GM12878 (cell line): ENCODE measurements at regions of chr1 and their contacts with region 1.

Region 1: DNA sequence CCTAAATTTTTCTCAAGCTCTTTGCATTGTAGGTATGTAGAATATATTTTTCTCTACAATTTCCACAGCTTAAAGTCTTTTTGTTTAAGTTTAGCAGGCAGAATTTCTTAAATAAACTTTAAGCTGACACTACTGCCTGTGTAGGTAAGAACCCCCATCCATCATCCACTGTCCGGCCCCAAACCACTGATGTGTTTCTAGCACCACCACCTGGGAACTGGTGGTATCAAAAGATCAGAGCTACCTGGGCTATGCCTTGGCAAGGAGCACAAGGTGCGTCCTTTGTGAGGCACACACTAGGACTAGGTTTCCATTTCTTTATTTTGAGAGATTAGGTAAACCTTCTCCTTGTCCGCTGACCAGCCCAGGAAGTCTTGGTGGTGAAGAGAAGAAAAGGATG is 10.5 kb upstream of the LELP1 start:
- DNase-seq: no peak
- ATAC-seq: peak; percentile 77
- H3K4me3 ChIP-seq: no peak overlapping the region
- H3K27ac ChIP-seq: no peak overlapping the region
- H3K4me1 ChIP-seq: no peaks in the 10 kb centered on the region
- H3K27me3 ChIP-seq: no peaks in the 10 kb centered on the region; a peak in 1 of 4 replicates
- CTCF ChIP-seq: peak; percentile 44 to 57 (median 46); a peak in 5 of 6 replicates
- EP300 ChIP-seq: no peak
- POLR2A ChIP-seq: no peak
- RAD21 ChIP-seq: peak; percentile 83

Region 2: DNA sequence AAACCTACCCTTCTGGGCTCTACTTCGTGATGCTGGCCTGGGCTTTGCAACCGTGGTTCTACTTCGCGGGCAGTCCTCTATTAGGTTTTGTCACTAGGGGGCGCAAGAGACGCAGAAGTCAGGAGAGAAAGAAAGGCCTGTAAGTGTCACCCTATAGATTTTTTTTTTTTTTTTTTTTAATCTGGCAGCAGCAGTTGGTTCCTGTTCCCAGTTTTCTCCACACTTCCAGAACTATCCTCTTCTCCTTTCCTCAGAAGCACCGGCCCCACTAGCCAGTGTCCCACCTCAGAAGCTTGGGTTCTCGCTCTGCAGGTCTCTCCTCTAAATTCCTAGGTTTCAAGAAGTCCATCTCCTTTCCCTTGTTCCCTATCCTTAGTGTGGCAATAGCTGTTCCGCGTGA is 538.6 kb before region 1 on chr1:
- CTCF ChIA-PET with region 1: interaction called, 20 read pairs
- POLR2A ChIA-PET with region 1: no interaction called
- RAD21 ChIA-PET with region 1: interaction called, 9 read pairs
- SMC1A ChIA-PET with region 1: interaction called, 6 read pairs
- in situ Hi-C with region 1: no loop called
- intact Hi-C with region 1: loop called (anchors 10 kb)
- DNase-seq: no peak
- ATAC-seq: peak; percentile 93
- H3K4me3 ChIP-seq: no peak overlapping the region
- H3K27ac ChIP-seq: no peak overlapping the region
- H3K4me1 ChIP-seq: no peaks in the 10 kb centered on the region
- H3K27me3 ChIP-seq: peaks cover 0 to 9% of the 10 kb centered on the region in 2 experiments; a peak in 2 of 4 replicates
- CTCF ChIP-seq: peak; percentile 68 to 84 (median 80)
- EP300 ChIP-seq: no peak
- POLR2A ChIP-seq: no peak
- RAD21 ChIP-seq: peak; percentile 77

Region 3: GRCh38 chr1:152878042-152878441 is 314.7 kb before region 1 on chr1 and contains the start of gene SMCP:
- CTCF ChIA-PET with region 1: interaction called, 94 read pairs
- POLR2A ChIA-PET with region 1: no interaction called
- RAD21 ChIA-PET with region 1: interaction called, 13 read pairs
- SMC1A ChIA-PET with region 1: interaction called, 49 read pairs
- in situ Hi-C with region 1: loop called (anchors 10 kb)
- intact Hi-C with region 1: no loop called
- DNase-seq: no peak
- ATAC-seq: no peak
- H3K4me3 ChIP-seq: no peak within 1 kb of the TSS
- H3K27ac ChIP-seq: no peak within 1 kb of the TSS
- H3K4me1 ChIP-seq: peaks cover 20% of the 10 kb centered on the region
- H3K27me3 ChIP-seq: no peaks in the 10 kb centered on the region
- CTCF ChIP-seq: peak; percentile 12 to 59 (median 14); a peak in 3 of 6 replicates
- EP300 ChIP-seq: no peak
- POLR2A ChIP-seq: no peak
- RAD21 ChIP-seq: peak; percentile 44
- polyA plus RNA-seq, gene SMCP: 0.27 to 0.69 TPM

Region 4: GRCh38 chr1:152926091-152926490 is 266.6 kb before region 1 on chr1:
- CTCF ChIA-PET with region 1: interaction called, 19 read pairs
- POLR2A ChIA-PET with region 1: no interaction called
- RAD21 ChIA-PET with region 1: interaction called, 21 read pairs
- SMC1A ChIA-PET with region 1: interaction called, 19 read pairs
- in situ Hi-C with region 1: no loop called
- intact Hi-C with region 1: no loop called
- DNase-seq: no peak
- ATAC-seq: peak; percentile 87
- H3K4me3 ChIP-seq: no peak overlapping the region
- H3K27ac ChIP-seq: no peak overlapping the region
- H3K4me1 ChIP-seq: no peaks in the 10 kb centered on the region
- H3K27me3 ChIP-seq: peaks cover 0 to 2% of the 10 kb centered on the region in 2 experiments; a peak in 1 of 4 replicates
- CTCF ChIP-seq: peak; percentile 74 to 80 (median 78); a peak in 5 of 6 replicates
- EP300 ChIP-seq: no peak
- POLR2A ChIP-seq: no peak
- RAD21 ChIP-seq: peak; percentile 99

Region 5: GRCh38 chr1:152960452-152961044 is 232.1 kb before region 1 on chr1:
- CTCF ChIA-PET with region 1: interaction called, 66 read pairs
- POLR2A ChIA-PET with region 1: no interaction called
- RAD21 ChIA-PET with region 1: interaction called, 27 read pairs
- SMC1A ChIA-PET with region 1: interaction called, 28 read pairs
- in situ Hi-C with region 1: no loop called
- intact Hi-C with region 1: loop called (anchors 1 kb)
- DNase-seq: no peak
- ATAC-seq: peak; percentile 67
- H3K4me3 ChIP-seq: no peak overlapping the region
- H3K27ac ChIP-seq: no peak overlapping the region
- H3K4me1 ChIP-seq: no peaks in the 10 kb centered on the region
- H3K27me3 ChIP-seq: peaks cover 0 to 2% of the 10 kb centered on the region in 2 experiments; a peak in 1 of 4 replicates
- CTCF ChIP-seq: peak; percentile 43 to 47 (median 44); a peak in 5 of 6 replicates
- EP300 ChIP-seq: no peak
- POLR2A ChIP-seq: no peak
- RAD21 ChIP-seq: peak; percentile 75

Region 6: GRCh38 chr1:153220606-153221303 is 28.1 kb after region 1 on chr1:
- CTCF ChIA-PET with region 1: interaction called, 37 read pairs
- POLR2A ChIA-PET with region 1: no interaction called
- RAD21 ChIA-PET with region 1: interaction called, 19 read pairs
- SMC1A ChIA-PET with region 1: interaction called, 14 read pairs
- in situ Hi-C with region 1: no loop called
- intact Hi-C with region 1: no loop called
- DNase-seq: no peak
- ATAC-seq: no peak
- H3K4me3 ChIP-seq: no peak overlapping the region
- H3K27ac ChIP-seq: no peak overlapping the region
- H3K4me1 ChIP-seq: no peaks in the 10 kb centered on the region
- H3K27me3 ChIP-seq: peaks cover 0 to 2% of the 10 kb centered on the region in 2 experiments; a peak in 1 of 4 replicates
- CTCF ChIP-seq: no peak
- EP300 ChIP-seq: no peak
- POLR2A ChIP-seq: no peak
- RAD21 ChIP-seq: no peak

Region 7: DNA sequence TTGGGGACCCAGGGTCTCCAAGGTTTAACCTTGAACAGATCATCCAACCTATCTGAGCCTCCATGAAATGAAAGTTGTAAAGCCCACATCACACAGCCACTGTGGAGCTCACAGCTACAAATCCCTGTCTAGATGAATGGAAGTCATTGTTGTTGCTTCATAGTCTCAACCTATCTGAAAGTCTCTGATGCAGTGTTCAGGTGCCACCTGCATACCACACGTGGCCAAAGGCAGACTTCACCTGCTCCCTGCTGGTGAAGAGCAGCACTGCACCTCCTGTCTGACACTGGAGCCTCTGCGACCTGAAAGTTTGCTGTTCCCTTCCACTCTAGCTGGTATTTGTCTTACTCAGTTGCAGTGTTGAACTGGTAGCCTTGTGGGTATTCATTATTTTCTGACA is 85.1 kb after region 1 on chr1:
- CTCF ChIA-PET with region 1: interaction called, 17 read pairs
- POLR2A ChIA-PET with region 1: no interaction called
- RAD21 ChIA-PET with region 1: no interaction called
- SMC1A ChIA-PET with region 1: interaction called, 9 read pairs
- in situ Hi-C with region 1: no loop called
- intact Hi-C with region 1: no loop called
- DNase-seq: no peak
- ATAC-seq: peak; percentile 99
- H3K4me3 ChIP-seq: no peak overlapping the region
- H3K27ac ChIP-seq: no peak overlapping the region
- H3K4me1 ChIP-seq: peaks cover under 1% of the 10 kb centered on the region; the same call in 1 of the 2 replicates
- H3K27me3 ChIP-seq: no peaks in the 10 kb centered on the region
- CTCF ChIP-seq: peak; percentile 87 to 91 (median 90)
- EP300 ChIP-seq: no peak
- POLR2A ChIP-seq: no peak
- RAD21 ChIP-seq: peak; percentile 70

Region 8: DNA sequence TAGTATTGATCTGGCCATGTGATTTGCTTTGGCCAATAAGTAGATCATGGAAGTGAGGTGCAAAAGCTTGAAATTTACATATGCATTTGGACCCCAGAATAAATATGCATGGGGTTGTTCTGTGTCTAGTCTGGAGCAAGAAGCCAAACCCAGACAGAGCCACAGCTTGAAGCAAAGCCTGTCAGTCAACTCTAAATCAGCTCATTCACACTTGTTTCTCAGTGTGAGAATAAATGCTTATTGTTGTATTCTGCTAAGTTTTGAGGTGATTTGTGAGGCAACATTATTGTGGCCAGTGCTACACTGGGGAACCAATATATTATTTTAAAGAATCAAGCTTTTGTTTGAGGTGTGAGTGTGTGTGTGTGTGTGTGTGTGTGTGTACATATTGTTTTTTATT is 132.2 kb after region 1 on chr1:
- CTCF ChIA-PET with region 1: no interaction called
- POLR2A ChIA-PET with region 1: no interaction called
- RAD21 ChIA-PET with region 1: no interaction called
- SMC1A ChIA-PET with region 1: no interaction called
- in situ Hi-C with region 1: no loop called
- intact Hi-C with region 1: no loop called
- DNase-seq: no peak
- ATAC-seq: no peak
- H3K4me3 ChIP-seq: no peak overlapping the region
- H3K27ac ChIP-seq: no peak overlapping the region
- H3K4me1 ChIP-seq: no peaks in the 10 kb centered on the region
- H3K27me3 ChIP-seq: no peaks in the 10 kb centered on the region
- CTCF ChIP-seq: no peak
- EP300 ChIP-seq: no peak
- POLR2A ChIP-seq: no peak
- RAD21 ChIP-seq: no peak